WTC11 (cell line): ENCODE measurements at regions of chr5 and their contacts with region 1.

Region 1: DNA sequence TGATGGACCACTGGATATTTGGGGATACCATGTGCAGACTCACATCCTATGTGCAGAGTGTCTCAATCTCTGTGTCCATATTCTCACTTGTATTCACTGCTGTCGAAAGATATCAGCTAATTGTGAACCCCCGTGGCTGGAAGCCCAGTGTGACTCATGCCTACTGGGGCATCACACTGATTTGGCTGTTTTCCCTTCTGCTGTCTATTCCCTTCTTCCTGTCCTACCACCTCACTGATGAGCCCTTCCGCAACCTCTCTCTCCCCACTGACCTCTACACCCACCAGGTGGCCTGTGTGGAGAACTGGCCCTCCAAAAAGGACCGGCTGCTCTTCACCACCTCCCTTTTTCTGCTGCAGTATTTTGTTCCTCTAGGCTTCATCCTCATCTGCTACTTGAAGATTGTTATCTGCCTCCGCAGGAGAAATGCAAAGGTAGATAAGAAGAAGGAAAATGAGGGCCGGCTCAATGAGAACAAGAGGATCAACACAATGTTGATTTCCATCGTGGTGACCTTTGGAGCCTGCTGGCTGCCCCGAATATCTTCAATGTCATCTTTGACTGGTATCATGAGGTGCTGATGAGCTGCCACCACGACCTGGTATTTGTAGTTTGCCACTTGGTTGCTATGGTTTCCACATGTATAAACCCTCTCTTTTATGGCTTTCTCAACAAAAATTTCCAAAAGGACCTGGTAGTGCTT is 54.5 kb upstream of the HNRNPA0 start:
- DNase-seq: no peak
- ATAC-seq: no peak
- H3K4me3 Mint-ChIP-seq: no peak overlapping the region
- H3K27ac Mint-ChIP-seq: no peak overlapping the region
- H3K4me1 Mint-ChIP-seq: no peaks in the 10 kb centered on the region
- H3K27me3 Mint-ChIP-seq: no peaks in the 10 kb centered on the region
- CTCF ChIP-seq: no peak

Region 2: GRCh38 chr5:137880313-137880712 is 71.7 kb after region 1 on chr5:
- CTCF ChIA-PET with region 1: no interaction called
- POLR2A ChIA-PET with region 1: no interaction called
- DNase-seq: no peak
- ATAC-seq: no peak
- H3K4me3 Mint-ChIP-seq: no peak overlapping the region
- H3K27ac Mint-ChIP-seq: no peak overlapping the region
- H3K4me1 Mint-ChIP-seq: no peaks in the 10 kb centered on the region
- H3K27me3 Mint-ChIP-seq: no peaks in the 10 kb centered on the region; the same call in 1 of the 2 replicates
- CTCF ChIP-seq: no peak

Region 3: DNA sequence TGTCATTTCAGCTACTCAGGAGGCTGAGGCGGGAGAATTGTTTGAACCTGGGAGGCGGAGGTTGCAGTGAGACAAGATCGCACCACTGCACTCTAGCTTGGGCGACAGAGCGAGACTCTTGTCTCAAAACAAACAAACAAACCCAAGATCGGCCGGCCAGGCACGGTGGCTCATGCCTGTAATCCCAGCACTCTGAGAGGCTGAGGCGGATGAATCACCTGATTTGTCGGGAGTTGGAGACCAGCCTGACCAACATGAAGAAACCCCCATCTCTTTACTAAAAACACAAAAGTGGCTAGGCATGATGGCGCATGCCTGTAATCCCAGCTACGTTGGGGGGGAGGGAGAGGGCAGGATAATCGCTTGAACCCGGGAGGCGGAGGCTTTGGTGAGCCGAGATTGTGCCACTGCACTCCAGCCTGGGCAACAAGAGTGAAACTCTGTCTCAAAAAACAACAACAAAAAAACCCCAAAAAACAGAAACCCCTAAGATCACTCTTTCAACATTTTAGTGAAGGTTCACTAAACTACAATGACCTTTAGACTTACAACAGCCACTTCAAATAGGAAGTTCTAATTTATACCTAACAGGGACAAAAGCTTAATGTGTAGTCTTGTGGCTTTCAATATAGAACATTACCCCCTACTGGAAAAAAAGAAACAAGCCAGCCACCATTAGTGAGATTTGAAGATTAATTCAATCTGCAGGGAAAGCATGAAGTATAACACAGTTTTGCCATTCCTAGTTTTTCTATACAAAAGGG is 759.6 kb after region 1 on chr5:
- CTCF ChIA-PET with region 1: no interaction called
- POLR2A ChIA-PET with region 1: interaction called, 10 read pairs
- DNase-seq: no peak
- ATAC-seq: no peak
- H3K4me3 Mint-ChIP-seq: no peak overlapping the region
- H3K27ac Mint-ChIP-seq: peak overlapping the region; percentile 41; the same call in 1 of the 2 replicates
- H3K4me1 Mint-ChIP-seq: no peaks in the 10 kb centered on the region
- H3K27me3 Mint-ChIP-seq: no peaks in the 10 kb centered on the region
- CTCF ChIP-seq: no peak